CD8-positive, alpha-beta T cell (primary cell): ENCODE measurements at regions of chr15 and their contacts with region 1.

Region 1: DNA sequence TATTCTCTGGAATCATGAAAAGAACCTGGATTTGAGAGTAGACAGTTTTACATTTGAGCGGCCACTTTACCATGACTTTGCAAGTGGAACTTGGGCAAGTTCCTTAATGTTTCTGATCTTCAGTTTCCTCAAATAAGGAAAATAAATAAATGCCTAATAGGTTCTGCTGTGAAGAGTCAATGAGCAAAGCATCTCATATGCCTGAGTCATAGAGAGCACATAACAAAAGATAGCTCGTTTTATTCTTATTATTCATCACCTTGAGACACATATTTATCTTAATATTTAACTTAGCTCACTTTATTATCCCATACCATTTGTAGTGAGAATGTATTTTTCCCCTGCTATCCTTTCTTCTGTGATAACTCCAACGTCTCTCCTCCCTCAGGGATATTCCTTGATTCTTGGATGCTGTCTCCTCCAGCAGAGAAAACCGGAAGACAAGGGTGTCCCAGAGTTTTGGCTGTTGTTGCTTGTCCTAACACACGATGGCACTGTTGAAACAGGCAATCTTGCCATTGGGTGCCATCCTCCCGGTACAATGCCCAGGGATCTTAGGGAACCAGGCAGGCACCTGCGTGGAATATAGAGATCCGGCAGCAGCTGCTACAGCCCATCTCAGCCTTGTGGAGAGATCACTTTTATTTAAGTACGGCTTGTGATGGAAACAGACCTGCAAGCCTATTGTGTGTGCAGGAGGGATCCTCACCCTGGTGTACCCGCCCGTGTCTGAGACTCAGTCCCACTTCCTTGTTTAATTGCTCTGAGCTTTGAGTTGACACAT is 33.3 kb upstream of the VPS33B start:
- DNase-seq: peak in 5 of 9 experiments; percentile 6 to 53 (median 30)
- ATAC-seq: no peak
- H3K4me3 ChIP-seq: no peak overlapping the region
- H3K4me3 Mint-ChIP-seq: no peak overlapping the region
- H3K27ac ChIP-seq: no peak overlapping the region
- H3K27ac Mint-ChIP-seq: no peak overlapping the region
- H3K4me1 ChIP-seq: no peaks in the 10 kb centered on the region
- H3K4me1 Mint-ChIP-seq: no peaks in the 10 kb centered on the region
- H3K27me3 ChIP-seq: peaks cover 0 to 2% of the 10 kb centered on the region in 2 experiments
- H3K27me3 Mint-ChIP-seq: peaks cover 57% of the 10 kb centered on the region
- CTCF ChIP-seq: peak; percentile 34

Region 2: DNA sequence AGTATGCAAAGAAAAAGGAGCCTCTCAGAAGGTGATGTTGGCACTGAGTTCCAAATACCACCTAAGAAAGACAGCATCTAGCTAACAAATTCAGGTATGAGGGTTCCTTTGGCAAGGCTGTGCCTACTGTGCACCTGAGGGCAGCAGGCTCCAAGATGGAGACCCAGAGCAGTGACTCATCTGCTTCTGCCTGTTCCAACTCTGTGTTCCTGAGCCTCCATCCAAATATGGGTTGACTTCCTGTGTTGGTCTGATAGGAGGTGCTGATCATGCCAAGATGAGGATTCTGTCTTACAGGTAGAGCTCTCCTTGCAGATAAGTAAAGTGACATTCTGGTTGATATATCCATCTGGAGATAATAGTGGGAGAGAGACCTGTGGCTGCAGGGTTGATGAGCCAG is 70.3 kb after region 1 on chr15:
- CTCF ChIA-PET with region 1: no interaction called
- POLR2A ChIA-PET with region 1: no interaction called
- intact Hi-C with region 1: no loop called
- DNase-seq: no peak
- ATAC-seq: no peak
- H3K4me3 ChIP-seq: no peak overlapping the region
- H3K4me3 Mint-ChIP-seq: no peak overlapping the region
- H3K27ac ChIP-seq: no peak overlapping the region
- H3K27ac Mint-ChIP-seq: no peak overlapping the region
- H3K4me1 ChIP-seq: no peaks in the 10 kb centered on the region
- H3K4me1 Mint-ChIP-seq: no peaks in the 10 kb centered on the region
- H3K27me3 ChIP-seq: peaks cover 0 to 3% of the 10 kb centered on the region in 2 experiments
- H3K27me3 Mint-ChIP-seq: peaks cover 31% of the 10 kb centered on the region
- CTCF ChIP-seq: no peak

Region 3: GRCh38 chr15:91224755-91225380 is 169.1 kb after region 1 on chr15:
- CTCF ChIA-PET with region 1: no interaction called
- POLR2A ChIA-PET with region 1: no interaction called
- intact Hi-C with region 1: loop called in 1 of 2 experiments (anchors 5 kb)
- DNase-seq: peak in 2 of 9 experiments; percentile 17 to 20
- ATAC-seq: no peak
- H3K4me3 ChIP-seq: no peak overlapping the region
- H3K4me3 Mint-ChIP-seq: no peak overlapping the region
- H3K27ac ChIP-seq: no peak overlapping the region
- H3K27ac Mint-ChIP-seq: no peak overlapping the region
- H3K4me1 ChIP-seq: no peaks in the 10 kb centered on the region
- H3K4me1 Mint-ChIP-seq: no peaks in the 10 kb centered on the region
- H3K27me3 ChIP-seq: no peaks in the 10 kb centered on the region
- H3K27me3 Mint-ChIP-seq: peaks cover 42% of the 10 kb centered on the region
- CTCF ChIP-seq: peak; percentile 33

Region 4: DNA sequence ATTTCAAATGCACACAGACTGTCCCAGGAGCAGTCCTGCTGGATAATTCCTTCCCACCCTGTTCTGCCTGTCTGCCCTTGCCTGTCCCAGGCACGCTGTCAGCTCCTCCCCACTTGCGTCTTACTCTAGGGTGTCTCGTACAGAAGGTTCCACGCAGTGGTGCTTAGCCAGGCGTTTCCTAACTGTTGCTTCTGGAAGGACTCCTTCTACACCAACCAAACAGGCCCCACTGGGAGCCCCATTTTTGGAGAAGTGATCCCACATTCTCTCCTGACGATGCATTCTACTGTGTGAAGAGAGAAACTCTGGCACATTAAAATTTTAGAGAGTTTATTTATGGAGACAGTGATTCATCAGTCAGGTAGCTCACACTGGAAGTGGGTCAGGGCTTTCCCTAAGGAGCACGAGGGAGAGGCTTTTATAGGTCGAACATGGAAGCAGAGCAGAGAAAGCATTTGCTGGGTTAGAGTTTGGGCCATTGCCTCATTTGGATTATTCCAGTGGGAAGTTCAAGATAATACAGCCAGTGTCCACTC is 208.3 kb after region 1 on chr15:
- CTCF ChIA-PET with region 1: interaction called, 10 read pairs
- POLR2A ChIA-PET with region 1: no interaction called
- intact Hi-C with region 1: no loop called
- DNase-seq: no peak
- ATAC-seq: no peak
- H3K4me3 ChIP-seq: no peak overlapping the region
- H3K4me3 Mint-ChIP-seq: no peak overlapping the region
- H3K27ac ChIP-seq: no peak overlapping the region
- H3K27ac Mint-ChIP-seq: no peak overlapping the region
- H3K4me1 ChIP-seq: no peaks in the 10 kb centered on the region
- H3K4me1 Mint-ChIP-seq: no peaks in the 10 kb centered on the region
- H3K27me3 ChIP-seq: peaks cover 0 to 7% of the 10 kb centered on the region in 2 experiments
- H3K27me3 Mint-ChIP-seq: peaks cover 23% of the 10 kb centered on the region
- CTCF ChIP-seq: no peak